ENCODE measurements at regions of chr4 and their contacts with region 1.

Region 1: DNA sequence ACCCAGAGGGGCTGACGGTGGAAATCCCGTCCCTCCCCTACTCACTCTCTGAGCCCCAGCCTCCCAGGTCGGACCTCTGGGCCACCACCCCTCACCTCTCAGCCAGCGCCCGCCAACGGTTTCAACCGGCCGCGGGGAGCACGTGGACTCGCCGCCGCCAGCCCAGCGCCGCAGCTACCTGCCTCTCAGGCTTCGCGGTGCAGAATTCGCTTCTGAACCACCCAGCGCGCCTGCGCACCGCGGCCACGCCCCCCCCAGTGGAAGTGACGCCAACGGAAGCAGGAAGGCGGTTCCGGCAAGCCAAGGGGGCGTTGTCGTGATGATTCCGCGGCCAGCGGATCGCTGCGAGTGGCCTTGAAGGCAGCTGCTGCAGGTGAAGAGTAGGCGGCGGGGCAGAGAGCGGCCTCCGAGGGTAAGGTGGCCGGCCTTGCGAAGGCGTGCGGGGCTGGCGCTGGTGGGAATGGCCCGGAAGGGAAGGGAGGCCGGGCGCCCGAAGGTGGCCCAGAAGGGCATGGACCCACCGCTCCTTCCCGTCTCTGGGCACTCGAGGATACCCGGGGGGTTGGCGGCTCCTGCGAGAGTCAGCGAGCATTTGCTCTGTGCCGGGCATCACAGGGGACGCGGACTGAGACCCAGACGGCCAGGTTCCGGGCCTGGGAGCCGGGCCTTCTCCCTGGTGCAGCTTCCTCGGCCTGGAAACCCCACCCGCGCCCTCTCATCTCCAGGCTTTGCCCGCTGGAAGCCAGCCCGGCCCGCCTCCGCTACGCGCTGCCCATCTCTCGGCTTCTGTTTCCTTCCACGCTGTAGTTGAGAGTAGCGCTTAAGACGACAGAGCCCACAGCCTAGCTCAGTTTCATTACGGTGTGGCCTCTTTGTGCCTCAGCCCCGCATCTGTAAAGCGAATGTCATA is at the starts of genes LYAR and ZBTB49:
- DNase-seq: peak; percentile 57 to 95
- H3K4me3 ChIP-seq: peak within 1 kb of the TSS; percentile 83 to 95
- H3K27ac ChIP-seq: peak within 1 kb of the TSS; percentile 71 to 76
- H3K4me1 ChIP-seq: peaks cover 7 to 11% of the 10 kb centered on the region in 2 donors
- H3K27me3 ChIP-seq: no peaks in the 10 kb centered on the region
- CTCF ChIP-seq: no peak
- total RNA-seq, gene LYAR: 4.7 TPM
- total RNA-seq, gene ZBTB49: not detected

Region 2: DNA sequence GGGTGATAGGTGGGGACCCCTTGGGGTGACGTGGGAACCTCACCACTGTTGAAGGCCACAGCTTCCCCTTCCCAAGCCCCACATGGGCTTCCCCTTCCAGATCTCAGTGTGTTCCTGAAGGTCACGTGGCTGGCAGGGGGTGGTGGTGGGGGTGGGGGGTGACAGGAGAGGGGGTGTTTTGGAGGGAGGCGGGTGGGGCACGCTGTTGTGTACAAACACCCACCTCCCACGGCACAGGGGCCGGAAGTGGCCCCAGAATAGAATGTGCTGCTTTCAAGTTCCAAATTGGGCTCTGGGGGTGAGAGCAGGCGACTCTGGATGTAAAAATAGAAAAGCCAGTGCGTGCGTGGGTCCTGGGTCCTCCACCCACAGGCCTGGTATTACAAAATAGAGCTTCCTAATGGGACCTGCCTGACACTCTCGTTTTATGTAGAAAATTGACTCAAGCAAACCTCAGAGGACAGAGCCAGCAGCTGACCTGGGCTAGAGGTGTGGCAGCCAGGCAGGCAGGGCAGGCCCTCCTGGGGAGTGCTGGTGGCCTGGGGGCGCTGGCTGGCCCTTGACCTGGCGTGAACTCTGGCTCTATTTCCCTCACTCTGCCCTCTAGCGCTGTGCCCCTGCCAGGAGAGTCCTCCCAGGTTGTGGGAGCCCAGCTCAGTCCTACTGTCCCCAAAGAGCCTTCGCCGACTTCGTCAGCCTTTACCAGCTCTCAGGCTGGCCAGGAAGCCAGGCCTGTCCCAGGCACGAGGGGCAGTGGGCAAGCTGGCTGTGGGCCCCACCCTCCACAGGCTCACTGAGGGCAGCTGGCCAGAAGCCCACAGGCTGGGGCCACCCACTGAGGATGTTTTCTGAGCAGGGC is 1502.7 kb before region 1 on chr4:
- intact Hi-C with region 1: no loop called
- DNase-seq: no peak
- H3K4me3 ChIP-seq: no peak overlapping the region
- H3K27ac ChIP-seq: peak overlapping the region; percentile 46 to 65
- H3K4me1 ChIP-seq: peaks cover 8 to 15% of the 10 kb centered on the region in 2 donors
- H3K27me3 ChIP-seq: no peaks in the 10 kb centered on the region
- CTCF ChIP-seq: no peak

Region 3: GRCh38 chr4:4248029-4248884 is 41.9 kb before region 1 on chr4 and contains the start of gene TMEM128:
- intact Hi-C with region 1: loop called (anchors 1 kb)
- DNase-seq: peak; percentile 53 to 97
- H3K4me3 ChIP-seq: peak within 1 kb of the TSS; percentile 69 to 86
- H3K27ac ChIP-seq: peak within 1 kb of the TSS; percentile 89 to 96
- H3K4me1 ChIP-seq: peaks cover 2 to 11% of the 10 kb centered on the region in 2 donors
- H3K27me3 ChIP-seq: no peaks in the 10 kb centered on the region
- CTCF ChIP-seq: peak in 2 of 3 experiments; percentile 15 to 17
- total RNA-seq, gene TMEM128: 0.64 TPM

Region 4: DNA sequence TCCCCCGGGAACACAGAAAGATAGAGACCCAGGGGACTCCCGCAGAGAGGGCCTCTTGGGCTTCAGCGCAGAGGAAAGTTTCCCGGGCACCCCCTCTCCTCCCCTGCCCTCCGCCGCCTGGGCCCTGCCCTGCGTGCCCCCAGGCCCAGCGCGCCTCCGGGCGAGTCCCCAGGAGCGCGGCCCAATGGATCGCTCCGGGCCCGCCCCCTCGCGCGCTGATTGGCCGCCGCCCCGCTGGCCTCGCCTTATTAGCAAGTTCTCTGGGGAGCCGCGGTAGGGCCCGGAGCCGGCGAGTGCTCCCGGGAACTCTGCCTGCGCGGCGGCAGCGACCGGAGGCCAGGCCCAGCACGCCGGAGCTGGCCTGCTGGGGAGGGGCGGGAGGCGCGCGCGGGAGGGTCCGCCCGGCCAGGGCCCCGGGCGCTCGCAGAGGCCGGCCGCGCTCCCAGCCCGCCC is 569.2 kb after region 1 on chr4 and contains the start of gene MSX1:
- intact Hi-C with region 1: loop called (anchors 5 kb)
- DNase-seq: peak; percentile 47 to 91
- H3K4me3 ChIP-seq: peak within 1 kb of the TSS; percentile 73 to 81
- H3K27ac ChIP-seq: peak within 1 kb of the TSS in 1 of 2 donors; percentile 15
- H3K4me1 ChIP-seq: peaks cover 0 to 8% of the 10 kb centered on the region in 2 donors
- H3K27me3 ChIP-seq: peaks cover 14% of the 10 kb centered on the region
- CTCF ChIP-seq: no peak
- total RNA-seq, gene MSX1: 26.0 TPM